ENCODE measurements at regions of chr1 and their contacts with region 1.

Region 1: DNA sequence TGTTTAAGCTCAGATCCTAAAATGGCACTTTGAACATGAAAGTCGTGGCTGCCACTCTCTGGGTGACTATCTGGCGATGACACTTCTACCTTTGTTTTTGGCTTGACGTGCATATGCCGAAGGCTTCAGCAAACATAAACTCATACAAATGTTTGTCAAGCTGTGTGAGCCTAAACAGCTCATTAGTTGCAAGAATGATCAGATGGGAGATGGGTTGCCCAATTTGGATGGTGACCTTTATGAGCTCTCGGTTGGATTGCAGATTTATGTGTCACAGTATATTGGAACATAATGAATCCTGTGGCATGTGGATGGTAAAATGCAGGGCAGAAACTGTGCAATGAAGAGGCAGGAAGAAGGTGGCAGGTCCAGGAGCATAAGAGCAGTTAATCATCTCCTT is 229.3 kb downstream of the DISC1 start:
- DNase-seq: no peak
- CTCF ChIP-seq: no peak

Region 2: DNA sequence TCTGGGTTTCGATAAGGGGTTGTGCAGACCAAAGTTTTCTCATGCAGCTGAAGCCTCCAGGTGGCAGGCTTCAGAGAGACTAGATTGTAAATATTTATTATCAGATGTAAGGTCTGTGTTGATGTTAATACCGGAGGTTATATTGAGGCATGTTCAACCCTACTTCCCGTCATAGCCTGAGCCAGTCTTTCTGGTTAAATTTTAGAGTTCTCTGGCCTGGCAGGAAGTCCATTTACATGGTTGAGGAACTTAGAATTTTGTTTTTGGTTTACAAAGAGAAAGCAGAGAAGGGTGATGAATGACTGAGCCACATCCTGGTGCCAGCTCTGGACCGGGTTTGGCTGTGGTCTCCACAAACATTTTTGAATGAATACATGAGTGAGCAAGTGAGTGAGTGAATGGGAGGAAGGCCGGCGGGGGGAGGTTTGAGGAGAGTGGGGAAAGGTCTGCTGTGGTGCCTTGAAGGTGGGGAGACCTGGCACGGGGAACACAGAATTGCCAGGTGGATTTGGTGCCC is 10.9 kb before region 1 on chr1:
- CTCF ChIA-PET with region 1: no interaction called
- POLR2A ChIA-PET with region 1: no interaction called
- DNase-seq: no peak
- CTCF ChIP-seq: no peak

Region 3: DNA sequence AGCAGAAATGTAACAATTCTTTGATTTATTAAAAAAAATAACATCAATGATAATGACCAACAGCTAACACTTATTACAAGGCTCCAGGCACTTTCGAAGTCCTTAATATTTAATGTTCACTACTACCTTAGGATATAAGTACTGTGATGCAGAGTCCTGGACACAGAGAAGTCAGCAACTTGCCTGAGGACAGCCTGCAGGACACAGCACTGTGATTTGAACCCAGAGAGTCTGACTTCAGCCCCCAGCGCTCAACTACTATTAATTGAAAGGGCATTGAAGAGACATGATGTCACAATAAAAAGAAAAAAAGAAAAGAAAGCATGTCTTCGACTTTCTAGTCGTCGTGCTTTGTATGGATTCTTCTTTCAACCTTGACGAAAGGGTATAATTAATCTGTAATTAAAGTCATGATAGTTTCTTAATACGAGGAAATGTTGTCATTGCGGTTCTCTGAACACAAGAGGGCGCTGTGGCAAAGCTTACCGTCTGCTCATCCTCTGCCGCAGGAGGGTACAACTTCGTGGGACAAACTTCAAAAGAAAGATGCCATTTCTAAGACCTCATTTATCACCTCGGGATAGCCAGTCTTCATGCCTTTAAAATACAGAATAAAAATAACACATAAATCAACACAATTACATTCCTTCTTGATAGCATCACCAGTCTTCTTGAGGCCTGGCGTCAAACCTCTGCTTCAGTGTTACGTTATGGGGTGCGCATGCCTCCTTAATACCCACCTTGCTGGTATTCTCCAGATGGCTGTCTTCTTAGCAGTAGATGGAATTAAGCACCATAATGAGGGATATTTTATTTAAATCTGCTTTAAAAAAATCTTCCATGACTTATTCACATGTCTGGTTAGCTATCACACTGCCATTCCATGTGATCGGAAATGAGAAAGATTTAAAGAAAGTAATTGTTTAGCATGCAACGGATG is 10.7 kb after region 1 on chr1:
- CTCF ChIA-PET with region 1: interaction called, 15 read pairs
- POLR2A ChIA-PET with region 1: no interaction called
- DNase-seq: peak; percentile 49
- CTCF ChIP-seq: peak; percentile 81

Region 4: DNA sequence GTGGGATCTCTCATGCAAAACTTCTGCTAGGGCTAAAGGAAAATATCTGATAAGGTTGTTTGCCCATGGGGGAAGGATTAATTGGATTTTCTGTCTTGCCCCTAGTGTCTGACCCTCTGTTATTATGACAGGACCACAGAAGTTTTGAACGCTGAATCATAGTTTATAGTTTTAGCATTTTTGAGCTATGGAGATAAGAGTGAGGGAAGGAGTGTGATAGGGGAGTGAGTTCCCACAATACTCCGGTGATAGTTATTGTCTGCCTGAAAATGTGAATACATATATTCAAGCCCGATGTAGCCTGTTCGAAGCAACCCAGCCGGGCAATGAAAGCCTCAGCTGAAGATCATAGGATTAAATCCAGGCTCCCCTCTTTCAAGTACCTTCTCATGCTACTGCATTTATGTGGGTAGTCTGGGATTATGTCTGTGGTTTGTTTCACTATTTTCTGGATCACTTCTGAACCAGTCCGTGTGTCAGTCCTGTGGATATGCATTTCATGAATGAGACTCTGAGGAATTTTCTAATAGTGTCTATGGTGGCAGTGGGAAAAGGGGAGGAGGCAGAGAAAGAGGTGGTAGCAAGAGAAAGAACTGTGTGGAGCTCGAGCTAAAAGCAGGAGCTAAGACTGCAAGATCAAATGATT is 29.4 kb after region 1 on chr1:
- CTCF ChIA-PET with region 1: no interaction called
- POLR2A ChIA-PET with region 1: no interaction called
- DNase-seq: no peak
- CTCF ChIP-seq: no peak

Measured in GM10248 (cell line).